ENCODE measurements at regions of chr12 and their contacts with region 1.

Region 1: DNA sequence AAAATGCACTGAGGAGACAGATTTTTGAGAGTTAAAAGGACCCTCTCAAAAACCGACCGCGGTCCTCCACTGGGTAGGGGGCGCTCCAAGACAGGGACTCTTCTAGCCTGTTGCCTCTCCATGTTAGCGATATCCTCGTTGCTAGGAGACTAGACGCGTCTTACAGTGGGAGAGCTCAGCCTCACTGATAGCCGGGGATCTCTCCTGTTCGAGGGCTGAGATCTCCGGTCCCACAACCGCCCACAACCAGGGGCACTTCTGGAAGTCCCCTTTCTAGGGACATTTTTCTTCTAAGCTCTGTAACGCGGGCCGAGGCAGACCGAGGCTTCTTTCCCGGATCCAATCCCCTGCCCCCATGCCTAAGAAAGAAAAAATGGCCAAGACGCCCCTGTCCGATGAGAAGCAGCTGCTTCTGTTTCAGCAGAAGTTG is 21.3 kb downstream of the FKBP11 start:
- DNase-seq: peak; percentile 88
- ATAC-seq: peak; percentile 97
- H3K4me3 Mint-ChIP-seq: peak overlapping the region; percentile 64
- H3K27ac Mint-ChIP-seq: no peak overlapping the region
- H3K4me1 Mint-ChIP-seq: peaks cover 12% of the 10 kb centered on the region
- H3K27me3 Mint-ChIP-seq: peaks cover 12% of the 10 kb centered on the region

Region 2: GRCh38 chr12:48105862-48106680 is 797.9 kb before region 1 on chr12 and contains the start of gene SENP1:
- CTCF ChIA-PET with region 1: no interaction called
- POLR2A ChIA-PET with region 1: no interaction called
- DNase-seq: peak; percentile 92
- ATAC-seq: peak; percentile 81
- H3K4me3 Mint-ChIP-seq: peak within 1 kb of the TSS; percentile 88
- H3K27ac Mint-ChIP-seq: peak within 1 kb of the TSS; percentile 94
- H3K4me1 Mint-ChIP-seq: peaks cover 54% of the 10 kb centered on the region
- H3K27me3 Mint-ChIP-seq: no peaks in the 10 kb centered on the region
- total RNA-seq, gene SENP1: 45.6 to 50.1 TPM

Region 3: GRCh38 chr12:48865434-48866290 is 38.3 kb before region 1 on chr12 and contains the start of gene RND1:
- CTCF ChIA-PET with region 1: interaction called, 10 read pairs
- POLR2A ChIA-PET with region 1: interaction called, 6 read pairs
- DNase-seq: peak; percentile 88
- ATAC-seq: peak; percentile 98
- H3K4me3 Mint-ChIP-seq: peak within 1 kb of the TSS; percentile 81
- H3K27ac Mint-ChIP-seq: peak within 1 kb of the TSS; percentile 71
- H3K4me1 Mint-ChIP-seq: peaks cover 23% of the 10 kb centered on the region
- H3K27me3 Mint-ChIP-seq: peaks cover 25% of the 10 kb centered on the region
- total RNA-seq, gene RND1: 1.4 to 2.5 TPM

Region 4: DNA sequence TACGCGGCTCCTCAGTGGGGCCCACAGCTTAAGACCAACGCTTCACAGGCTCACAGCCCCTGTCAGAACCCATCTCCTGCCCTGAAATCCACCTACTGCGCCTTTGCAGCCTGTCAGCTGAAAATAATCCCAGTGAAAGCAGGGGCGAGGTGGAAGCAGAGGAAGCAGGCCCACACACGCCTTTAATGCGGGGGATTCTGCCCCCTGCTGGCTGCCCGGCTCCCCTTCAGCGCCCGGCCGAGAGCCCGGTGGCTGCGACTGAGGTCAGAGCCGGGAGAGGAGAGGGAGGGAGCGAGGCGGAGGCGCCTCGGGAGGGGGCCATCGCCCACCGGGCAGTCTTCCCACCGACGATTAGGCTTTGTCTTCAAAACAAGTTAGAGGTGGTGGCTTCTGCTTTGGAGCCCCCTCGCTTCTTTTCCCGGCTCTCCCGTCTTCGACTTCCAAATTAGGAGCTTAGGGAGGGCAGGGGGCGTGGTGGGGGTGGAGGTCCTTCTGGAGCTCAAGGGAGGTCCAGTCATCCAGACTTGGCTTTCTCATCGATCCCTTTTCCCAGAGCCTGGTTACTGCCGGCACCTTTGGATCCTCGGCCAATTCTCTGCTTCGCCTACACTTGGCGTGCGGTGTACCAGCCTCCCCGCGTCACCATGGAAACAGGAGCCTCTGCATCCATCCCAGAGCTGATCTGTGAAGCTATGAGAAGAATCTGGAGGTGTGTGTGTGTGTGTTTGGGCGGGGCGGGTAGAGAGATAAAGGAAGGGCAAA is 13.2 kb before region 1 on chr12:
- CTCF ChIA-PET with region 1: interaction called, 77 read pairs
- POLR2A ChIA-PET with region 1: no interaction called
- DNase-seq: peak; percentile 81
- ATAC-seq: peak; percentile 98
- H3K4me3 Mint-ChIP-seq: no peak overlapping the region
- H3K27ac Mint-ChIP-seq: no peak overlapping the region
- H3K4me1 Mint-ChIP-seq: peaks cover 8% of the 10 kb centered on the region
- H3K27me3 Mint-ChIP-seq: peaks cover 15% of the 10 kb centered on the region

Region 5: GRCh38 chr12:48924617-48925303 is 20.8 kb after region 1 on chr12:
- CTCF ChIA-PET with region 1: interaction called, 73 read pairs
- POLR2A ChIA-PET with region 1: interaction called, 4 read pairs
- DNase-seq: peak; percentile 85
- ATAC-seq: peak; percentile 87
- H3K4me3 Mint-ChIP-seq: peak overlapping the region; percentile 93
- H3K27ac Mint-ChIP-seq: peak overlapping the region; percentile 95
- H3K4me1 Mint-ChIP-seq: peaks cover 21% of the 10 kb centered on the region
- H3K27me3 Mint-ChIP-seq: no peaks in the 10 kb centered on the region

Region 6: DNA sequence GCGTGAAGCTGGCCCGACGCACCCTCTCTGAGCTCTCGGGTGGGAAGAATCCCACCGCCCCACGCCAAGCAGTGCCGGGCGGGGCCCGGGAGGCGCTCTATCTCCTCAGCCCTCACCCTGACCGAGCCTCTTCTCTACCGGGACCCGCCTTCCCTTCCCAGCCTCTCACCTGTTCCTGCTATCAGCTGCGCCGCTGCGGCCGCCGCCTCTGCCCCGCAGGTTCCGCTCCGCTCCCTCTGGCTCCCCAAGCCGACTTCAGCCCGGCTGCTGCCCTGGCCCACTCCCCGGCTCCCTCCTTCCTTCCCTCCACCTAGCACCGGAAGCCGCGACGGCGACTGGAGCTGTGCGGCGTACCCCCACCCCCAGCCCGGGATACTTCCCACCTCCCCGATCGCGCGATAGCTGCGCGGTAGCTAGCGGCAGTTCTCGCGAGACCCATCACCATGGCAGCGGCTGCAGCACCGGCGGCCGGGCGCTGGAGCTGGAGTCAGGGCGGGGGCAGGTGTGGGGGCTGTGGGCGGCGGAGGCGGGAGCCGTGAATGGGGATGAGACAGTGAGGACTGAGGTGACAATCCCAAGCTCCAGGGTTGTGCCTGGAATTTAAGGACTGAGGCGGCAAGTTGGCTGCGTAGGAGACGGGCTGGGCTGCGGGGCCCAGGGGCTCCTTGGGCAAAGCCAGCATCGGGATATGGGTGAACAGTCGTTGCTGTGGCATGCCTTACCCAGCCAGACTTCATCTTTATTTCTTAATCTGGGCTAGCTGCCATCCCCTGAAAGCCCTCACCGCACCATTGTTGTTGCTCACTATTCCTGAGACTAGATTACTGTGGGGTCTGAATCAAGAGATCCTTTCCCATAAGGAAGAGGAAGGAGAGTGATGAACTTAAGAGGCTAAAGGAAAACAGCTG is 53.4 kb after region 1 on chr12 and contains the start of gene ARF3:
- CTCF ChIA-PET with region 1: interaction called, 10 read pairs
- POLR2A ChIA-PET with region 1: no interaction called
- DNase-seq: peak; percentile 95
- ATAC-seq: peak; percentile 96
- H3K4me3 Mint-ChIP-seq: peak within 1 kb of the TSS; percentile 94
- H3K27ac Mint-ChIP-seq: peak within 1 kb of the TSS; percentile 85
- H3K4me1 Mint-ChIP-seq: peaks cover 33% of the 10 kb centered on the region
- H3K27me3 Mint-ChIP-seq: peaks cover 14% of the 10 kb centered on the region
- total RNA-seq, gene ARF3: 104 to 108 TPM

Region 7: GRCh38 chr12:49279706-49280159 is 375.7 kb after region 1 on chr12:
- CTCF ChIA-PET with region 1: no interaction called
- POLR2A ChIA-PET with region 1: no interaction called
- DNase-seq: no peak
- ATAC-seq: no peak
- H3K4me3 Mint-ChIP-seq: no peak overlapping the region
- H3K27ac Mint-ChIP-seq: no peak overlapping the region
- H3K4me1 Mint-ChIP-seq: no peaks in the 10 kb centered on the region
- H3K27me3 Mint-ChIP-seq: peaks cover 6% of the 10 kb centered on the region